ENCODE measurements at regions of chr9 and their contacts with region 1.

Region 1: GRCh38 chr9:69971643-69972449 is 71.8 kb upstream of the MAMDC2 start:
- DNase-seq: peak; percentile 23 to 55 (median 43)
- H3K4me3 ChIP-seq: no peak overlapping the region
- H3K4me3 Mint-ChIP-seq: peak overlapping the region in 1 of 2 donors; percentile 69
- H3K27ac ChIP-seq: no peak overlapping the region
- H3K27ac Mint-ChIP-seq: no peak overlapping the region
- H3K4me1 ChIP-seq: no peaks in the 10 kb centered on the region
- H3K4me1 Mint-ChIP-seq: peaks cover 3% of the 10 kb centered on the region
- H3K27me3 ChIP-seq: no peaks in the 10 kb centered on the region
- H3K27me3 Mint-ChIP-seq: peaks cover 0 to 9% (median 3%) of the 10 kb centered on the region in 3 donors
- CTCF ChIP-seq: peak; percentile 81

Region 2: DNA sequence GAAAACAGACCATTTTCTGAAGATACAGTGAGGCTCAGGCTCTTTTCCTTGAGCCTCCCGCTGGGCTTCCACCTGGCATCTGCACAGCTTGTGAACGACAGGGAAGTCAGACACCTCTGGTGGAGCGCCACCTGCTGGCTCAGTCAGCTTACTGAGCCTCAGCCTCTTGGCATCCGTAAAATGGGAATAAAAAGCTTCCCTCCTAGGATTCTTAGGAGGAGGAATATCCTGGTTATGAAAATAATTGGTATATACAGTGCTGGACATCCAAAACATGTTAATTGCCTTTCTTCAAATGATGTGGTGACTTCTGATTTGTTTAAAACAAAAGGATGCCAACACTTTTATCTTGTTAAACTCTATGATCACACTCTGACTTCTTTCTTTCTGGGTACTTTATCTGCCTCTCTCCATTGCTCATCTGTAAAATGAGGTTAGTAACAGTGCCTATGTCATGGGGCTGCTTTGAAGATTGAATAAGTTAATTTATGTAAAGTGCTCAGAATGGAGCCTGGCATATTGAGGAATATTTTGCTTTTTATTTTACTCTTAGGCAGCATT is 139.3 kb after region 1 on chr9:
- intact Hi-C with region 1: loop called (anchors 2 kb)
- DNase-seq: peak; percentile 39 to 67 (median 63)
- H3K4me3 ChIP-seq: no peak overlapping the region
- H3K4me3 Mint-ChIP-seq: no peak overlapping the region
- H3K27ac ChIP-seq: no peak overlapping the region
- H3K27ac Mint-ChIP-seq: no peak overlapping the region
- H3K4me1 ChIP-seq: no peaks in the 10 kb centered on the region
- H3K4me1 Mint-ChIP-seq: peaks cover 2% of the 10 kb centered on the region
- H3K27me3 ChIP-seq: no peaks in the 10 kb centered on the region
- H3K27me3 Mint-ChIP-seq: peaks cover 0 to 3% (median 2%) of the 10 kb centered on the region in 3 donors
- CTCF ChIP-seq: peak; percentile 99